Posterior vena cava (tissue), 2 donors: ENCODE measurements at regions of chr16 and their contacts with region 1.

Region 1: GRCh38 chr16:5993356-5993755 is 895.8 kb upstream of the EEF2KMT start:
- DNase-seq: no peak

Region 2: DNA sequence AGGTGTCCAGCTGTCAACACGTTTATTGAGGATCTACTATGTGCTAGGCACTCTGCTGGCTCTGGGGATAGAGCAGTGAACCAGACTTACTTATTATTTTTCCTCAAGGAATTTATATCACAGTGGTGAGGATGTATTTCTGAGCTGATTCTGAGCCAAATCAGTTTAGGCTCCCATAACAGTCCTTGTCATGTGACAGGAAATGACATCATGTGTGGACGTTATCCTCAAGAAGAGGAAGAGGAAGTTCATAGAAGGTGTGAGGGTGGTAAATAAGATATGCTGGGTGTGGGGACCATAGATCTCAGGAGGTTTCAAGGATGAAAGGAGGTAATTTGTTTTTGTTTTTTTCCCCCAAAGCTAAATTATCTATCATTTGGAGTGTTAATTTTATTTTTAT is 22.2 kb before region 1 on chr16:
- intact Hi-C with region 1: loop called in 1 of 2 experiments (anchors 1 kb)
- DNase-seq: no peak